ENCODE measurements at regions of chr11 and their contacts with region 1.

Region 1: DNA sequence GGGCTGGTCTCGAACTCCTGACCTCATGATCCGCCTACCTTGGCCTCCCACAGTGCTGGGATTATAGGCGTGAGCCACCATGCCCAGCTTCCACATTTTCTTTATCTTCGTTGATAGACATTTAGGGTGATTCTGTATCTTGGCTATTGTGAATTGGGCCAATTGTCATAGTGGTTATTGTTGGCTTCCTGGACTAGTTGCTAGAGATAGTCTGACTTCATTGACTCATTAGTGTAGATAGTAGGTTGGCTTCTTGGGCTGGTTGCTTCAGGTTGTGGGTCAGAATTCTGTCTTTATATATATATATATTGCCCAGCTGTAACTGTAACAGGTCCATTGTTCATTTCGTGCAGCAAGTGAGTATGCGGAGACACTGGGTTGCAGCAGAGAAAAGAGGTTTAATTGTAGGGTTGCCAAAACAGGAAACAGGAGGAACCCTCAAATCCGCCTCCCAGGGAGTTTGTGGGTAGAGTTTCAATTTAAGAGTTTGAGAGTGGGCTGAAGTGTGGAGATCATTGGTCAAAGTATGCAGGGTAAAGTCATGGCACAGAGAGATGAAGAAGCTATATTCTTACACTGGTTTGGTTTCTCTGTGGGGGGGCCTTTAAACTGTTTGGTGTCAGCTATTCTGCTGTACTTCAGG is 22.0 kb downstream of the ATG13 start:
- DNase-seq: no peak
- ATAC-seq: no peak
- H3K4me3 ChIP-seq: no peak overlapping the region
- H3K27ac ChIP-seq: no peak overlapping the region
- H3K4me1 ChIP-seq: peaks cover 0 to 9% (median 0%) of the 10 kb centered on the region in 9 donors
- H3K27me3 ChIP-seq: no peaks in the 10 kb centered on the region
- CTCF ChIP-seq: no peak

Region 2: DNA sequence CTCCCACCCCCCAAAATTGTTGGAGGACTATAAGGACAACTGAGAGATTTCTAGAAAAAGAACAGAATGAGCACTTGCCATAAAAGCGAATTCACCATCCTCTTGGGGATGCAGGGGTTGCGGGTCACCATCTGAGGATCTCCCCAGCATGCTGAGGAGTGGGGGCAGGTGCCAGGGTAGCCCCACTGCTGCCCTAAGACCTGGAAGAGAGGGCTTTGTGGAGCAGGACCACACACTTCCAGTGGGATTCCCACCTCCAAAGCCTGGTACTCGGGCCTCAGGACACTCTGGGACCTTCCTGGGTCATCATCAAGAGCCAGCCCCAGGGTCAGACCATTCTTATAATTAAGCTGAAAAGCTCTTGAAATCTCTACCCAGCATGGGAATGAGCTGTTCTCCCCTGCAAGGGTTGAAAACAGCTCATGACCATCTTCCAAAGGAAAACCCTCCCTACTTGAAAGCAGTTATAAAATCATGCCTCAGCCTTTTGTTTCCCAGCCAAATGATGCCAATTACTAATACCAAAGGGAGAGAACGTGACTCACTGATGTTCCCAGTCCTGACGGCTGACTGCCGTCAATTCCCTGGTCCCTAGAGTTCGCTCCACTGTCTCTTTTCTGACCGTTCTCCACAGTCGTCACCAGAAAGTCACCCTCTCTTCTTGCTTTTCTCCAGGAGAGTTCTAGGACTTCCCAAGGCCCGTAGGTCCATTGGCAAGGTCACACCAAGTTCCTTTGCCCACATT is 438.6 kb before region 1 on chr11:
- intact Hi-C with region 1: no loop called
- DNase-seq: no peak
- ATAC-seq: no peak
- H3K4me3 ChIP-seq: no peak overlapping the region
- H3K27ac ChIP-seq: no peak overlapping the region
- H3K4me1 ChIP-seq: no peaks in the 10 kb centered on the region
- H3K27me3 ChIP-seq: peaks cover 0 to 24% (median 16%) of the 10 kb centered on the region in 7 donors
- CTCF ChIP-seq: no peak

Region 3: GRCh38 chr11:46554205-46555055 is 84.9 kb before region 1 on chr11:
- intact Hi-C with region 1: no loop called
- DNase-seq: no peak
- ATAC-seq: peak in 7 of 8 donors; percentile 49 to 87 (median 79)
- H3K4me3 ChIP-seq: no peak overlapping the region
- H3K27ac ChIP-seq: peak overlapping the region in 9 of 10 donors; percentile 19 to 71 (median 57)
- H3K4me1 ChIP-seq: peaks cover 6 to 53% (median 38%) of the 10 kb centered on the region in 9 donors
- H3K27me3 ChIP-seq: no peaks in the 10 kb centered on the region
- CTCF ChIP-seq: no peak

Region 4: DNA sequence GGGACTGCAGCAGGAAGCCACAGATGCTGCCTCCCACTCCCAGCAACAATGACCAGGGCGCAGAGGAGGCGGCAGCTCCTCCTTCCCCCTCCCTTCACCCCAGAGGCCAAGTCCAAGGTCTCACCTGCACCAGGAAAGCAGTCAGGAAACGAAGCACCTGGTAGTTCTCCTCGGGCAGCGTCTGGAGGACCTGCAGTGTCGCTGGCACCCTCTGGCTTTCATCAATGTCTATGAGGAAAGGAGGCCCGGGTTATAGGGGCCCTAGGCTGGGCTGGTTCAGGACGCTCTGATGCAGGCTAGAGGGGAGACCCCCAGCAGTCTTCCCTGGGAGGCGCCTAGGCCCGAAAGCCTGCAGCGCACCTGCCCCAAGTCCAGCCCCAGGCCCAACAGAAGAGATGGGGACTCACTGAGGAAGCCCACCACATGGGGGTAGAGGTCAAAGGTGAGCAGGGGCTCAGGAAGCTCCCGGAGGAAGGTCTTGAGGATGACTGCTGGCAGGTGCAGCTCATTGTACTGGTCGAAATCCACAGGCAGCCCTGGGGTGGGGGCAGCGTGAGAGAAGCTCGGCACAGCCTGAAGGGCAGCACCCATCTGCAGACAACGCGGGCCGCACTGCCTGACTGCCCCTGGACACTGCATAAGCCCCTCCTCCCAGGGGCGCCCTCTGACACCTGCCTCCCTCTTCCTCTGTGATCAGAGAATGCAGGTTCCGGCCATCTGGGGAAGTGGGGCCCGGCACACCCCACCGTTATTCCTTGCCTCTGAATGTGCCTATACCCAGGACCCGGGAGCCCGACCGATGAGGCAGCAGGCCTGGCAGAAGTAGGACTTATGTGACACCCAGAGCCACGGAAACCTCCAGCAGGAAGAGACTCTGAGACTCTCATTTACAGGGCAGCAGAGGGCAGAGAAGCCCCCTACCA is 40.2 kb after region 1 on chr11:
- intact Hi-C with region 1: loop called in 1 of 10 experiments (anchors 1 kb)
- DNase-seq: no peak
- ATAC-seq: no peak
- H3K4me3 ChIP-seq: no peak overlapping the region
- H3K27ac ChIP-seq: no peak overlapping the region
- H3K4me1 ChIP-seq: peaks cover 12 to 54% (median 46%) of the 10 kb centered on the region in 9 donors
- H3K27me3 ChIP-seq: no peaks in the 10 kb centered on the region
- CTCF ChIP-seq: no peak

Region 5: GRCh38 chr11:47660031-47660430 is 1020.7 kb after region 1 on chr11:
- intact Hi-C with region 1: loop called in 1 of 10 experiments (anchors 5 kb)
- DNase-seq: no peak
- ATAC-seq: no peak
- H3K4me3 ChIP-seq: no peak overlapping the region
- H3K27ac ChIP-seq: no peak overlapping the region
- H3K4me1 ChIP-seq: no peaks in the 10 kb centered on the region
- H3K27me3 ChIP-seq: no peaks in the 10 kb centered on the region
- CTCF ChIP-seq: no peak

Measured in heart right ventricle (tissue), 16 donors.